Activated B cell treated with CpG ODN at 0.5 μM for 24 hours (primary cell): ENCODE measurements at regions of chr10 and their contacts with region 1.

Region 1: DNA sequence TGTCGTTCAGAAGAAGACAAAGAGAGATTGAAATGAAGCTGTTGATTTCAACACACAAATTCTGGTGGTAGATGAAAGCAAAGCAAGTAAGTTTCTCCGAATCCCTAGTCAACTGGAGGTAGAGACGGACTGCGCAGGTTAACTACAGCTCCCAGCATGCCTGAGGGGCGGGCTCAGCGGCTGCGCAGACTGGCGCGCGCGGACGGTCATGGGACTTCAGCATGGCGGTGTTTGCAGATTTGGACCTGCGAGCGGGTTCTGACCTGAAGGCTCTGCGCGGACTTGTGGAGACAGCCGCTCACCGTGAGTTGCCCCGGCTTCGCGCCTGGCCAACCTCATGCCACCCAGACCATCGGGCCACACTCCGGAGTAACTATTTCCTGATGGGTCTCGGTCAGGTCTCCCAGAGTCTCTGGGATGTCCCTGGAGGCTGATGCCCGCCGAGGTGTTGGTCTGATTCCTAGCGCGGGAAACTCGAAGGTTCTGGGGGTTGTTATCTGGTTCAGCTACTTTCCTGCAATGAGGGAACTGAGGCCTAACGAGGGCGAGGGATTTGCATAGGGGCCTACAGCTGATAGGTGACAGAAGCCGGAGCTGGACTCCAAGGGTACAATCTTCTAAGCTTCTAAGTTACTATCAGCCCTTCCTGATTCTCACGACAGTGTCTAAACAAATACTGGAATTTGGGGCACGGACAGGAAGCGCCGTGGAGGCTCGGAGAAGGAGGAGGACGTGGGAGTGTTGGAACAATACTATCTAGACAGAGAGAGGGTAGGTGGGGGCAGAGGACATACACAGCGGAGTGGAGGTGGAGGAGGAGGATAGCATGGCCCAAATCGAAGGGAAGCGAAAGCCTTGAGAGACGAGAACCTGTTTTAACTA is at the start of gene RPP30:
- DNase-seq: peak; percentile 77
- ATAC-seq: peak; percentile 97
- H3K4me3 Mint-ChIP-seq: peak within 1 kb of the TSS; percentile 96
- H3K27ac Mint-ChIP-seq: peak within 1 kb of the TSS; percentile 89
- H3K4me1 Mint-ChIP-seq: peaks cover 30% of the 10 kb centered on the region
- H3K27me3 Mint-ChIP-seq: peaks cover 14% of the 10 kb centered on the region
- CTCF ChIP-seq: no peak
- total RNA-seq, gene RPP30: 43.7 and 44.6 TPM in 2 replicates

Region 2: DNA sequence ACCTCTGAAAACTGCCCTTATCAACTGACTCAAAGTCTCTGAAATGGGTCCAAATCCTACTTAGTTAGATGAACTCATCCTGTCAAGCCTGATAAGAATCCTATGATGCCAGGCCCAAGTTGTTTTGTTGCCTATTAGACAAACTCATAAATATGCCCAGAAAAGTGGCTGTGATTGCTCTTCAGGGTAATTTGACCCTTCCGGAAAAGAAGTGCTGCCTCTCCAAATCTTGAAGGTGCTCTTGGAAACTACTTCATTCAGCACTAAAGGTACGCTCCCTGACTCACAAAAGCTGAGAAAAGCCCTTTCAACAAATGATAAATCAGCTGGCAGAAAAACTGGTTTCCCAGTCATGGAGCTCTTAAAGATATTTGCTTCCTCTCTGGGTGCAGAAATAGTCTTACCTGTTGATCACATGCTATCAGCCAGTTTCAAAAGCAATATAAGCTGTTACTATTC is 1451.0 kb before region 1 on chr10:
- CTCF ChIA-PET with region 1: no interaction called
- POLR2A ChIA-PET with region 1: no interaction called
- intact Hi-C with region 1: loop called (anchors 5 kb)
- DNase-seq: no peak
- ATAC-seq: no peak
- H3K4me3 Mint-ChIP-seq: no peak overlapping the region
- H3K27ac Mint-ChIP-seq: no peak overlapping the region
- H3K4me1 Mint-ChIP-seq: peaks cover 50% of the 10 kb centered on the region
- H3K27me3 Mint-ChIP-seq: no peaks in the 10 kb centered on the region
- CTCF ChIP-seq: no peak

Region 3: GRCh38 chr10:90032519-90032918 is 839.5 kb before region 1 on chr10:
- CTCF ChIA-PET with region 1: no interaction called
- POLR2A ChIA-PET with region 1: no interaction called
- intact Hi-C with region 1: no loop called
- DNase-seq: no peak
- ATAC-seq: no peak
- H3K4me3 Mint-ChIP-seq: no peak overlapping the region
- H3K27ac Mint-ChIP-seq: no peak overlapping the region
- H3K4me1 Mint-ChIP-seq: peaks cover 10% of the 10 kb centered on the region
- H3K27me3 Mint-ChIP-seq: peaks cover 7% of the 10 kb centered on the region
- CTCF ChIP-seq: no peak

Region 4: GRCh38 chr10:90047243-90047729 is 824.7 kb before region 1 on chr10:
- CTCF ChIA-PET with region 1: no interaction called
- POLR2A ChIA-PET with region 1: no interaction called
- intact Hi-C with region 1: loop called (anchors 5 kb)
- DNase-seq: no peak
- ATAC-seq: peak; percentile 82
- H3K4me3 Mint-ChIP-seq: peak overlapping the region; percentile 68
- H3K27ac Mint-ChIP-seq: peak overlapping the region; percentile 94
- H3K4me1 Mint-ChIP-seq: peaks cover 44% of the 10 kb centered on the region
- H3K27me3 Mint-ChIP-seq: no peaks in the 10 kb centered on the region
- CTCF ChIP-seq: no peak

Region 5: GRCh38 chr10:90857635-90858460 is 14.2 kb before region 1 on chr10 and contains the start of gene HTR7:
- CTCF ChIA-PET with region 1: interaction called, 8 read pairs
- POLR2A ChIA-PET with region 1: interaction called, 5 read pairs
- intact Hi-C with region 1: loop called (anchors 1 kb)
- DNase-seq: peak; percentile 81
- ATAC-seq: peak; percentile 83
- H3K4me3 Mint-ChIP-seq: peak within 1 kb of the TSS; percentile 87
- H3K27ac Mint-ChIP-seq: peak within 1 kb of the TSS; percentile 24
- H3K4me1 Mint-ChIP-seq: peaks cover 8% of the 10 kb centered on the region
- H3K27me3 Mint-ChIP-seq: peaks cover 29% of the 10 kb centered on the region
- CTCF ChIP-seq: no peak
- total RNA-seq, gene HTR7: not detected in 2 replicates

Region 6: DNA sequence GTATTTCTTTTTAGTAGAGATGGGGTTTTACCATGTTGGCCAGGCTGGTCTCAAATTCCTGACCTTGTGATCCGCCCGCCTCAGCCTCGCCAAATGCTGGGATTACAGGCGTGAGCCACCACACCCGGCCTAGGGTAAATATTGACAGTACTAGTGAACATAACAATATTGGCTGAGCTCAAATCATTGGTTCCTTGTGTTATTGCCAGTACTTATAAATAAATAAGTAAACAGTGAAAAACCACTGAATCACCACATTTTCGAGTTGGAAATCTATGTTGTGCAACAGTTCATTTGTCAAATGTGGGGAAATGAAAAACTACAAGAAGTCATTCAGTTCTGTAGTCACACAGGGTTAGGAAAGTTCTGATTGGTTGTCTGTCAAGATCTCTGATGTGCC is 15.5 kb after region 1 on chr10:
- CTCF ChIA-PET with region 1: no interaction called
- POLR2A ChIA-PET with region 1: no interaction called
- intact Hi-C with region 1: no loop called
- DNase-seq: no peak
- ATAC-seq: no peak
- H3K4me3 Mint-ChIP-seq: no peak overlapping the region
- H3K27ac Mint-ChIP-seq: no peak overlapping the region
- H3K4me1 Mint-ChIP-seq: no peaks in the 10 kb centered on the region
- H3K27me3 Mint-ChIP-seq: no peaks in the 10 kb centered on the region
- CTCF ChIP-seq: no peak

Region 7: GRCh38 chr10:91923371-91924211 is 1051.6 kb after region 1 on chr10 and contains the start of gene BTAF1:
- CTCF ChIA-PET with region 1: no interaction called
- POLR2A ChIA-PET with region 1: interaction called, 3 read pairs
- intact Hi-C with region 1: loop called (anchors 5 kb)
- DNase-seq: peak; percentile 91
- ATAC-seq: peak; percentile 94
- H3K4me3 Mint-ChIP-seq: peak within 1 kb of the TSS; percentile 92
- H3K27ac Mint-ChIP-seq: peak within 1 kb of the TSS; percentile 96
- H3K4me1 Mint-ChIP-seq: peaks cover 42% of the 10 kb centered on the region
- H3K27me3 Mint-ChIP-seq: no peaks in the 10 kb centered on the region
- CTCF ChIP-seq: no peak
- total RNA-seq, gene BTAF1: 63.4 and 74.7 TPM in 2 replicates